GM12878 (cell line): ENCODE measurements at regions of chr2 and their contacts with region 1.

Region 1: GRCh38 chr2:152627351-152627957 is 89.8 kb downstream of the PRPF40A start:
- DNase-seq: no peak
- ATAC-seq: peak; percentile 74
- H3K4me3 ChIP-seq: no peak overlapping the region
- H3K27ac ChIP-seq: no peak overlapping the region
- H3K4me1 ChIP-seq: no peaks in the 10 kb centered on the region
- H3K27me3 ChIP-seq: no peaks in the 10 kb centered on the region
- CTCF ChIP-seq: peak; percentile 39 to 66 (median 42); a peak in 5 of 6 replicates
- EP300 ChIP-seq: no peak
- POLR2A ChIP-seq: no peak
- RAD21 ChIP-seq: peak; percentile 85

Region 2: GRCh38 chr2:152189622-152190495 is 437.6 kb before region 1 on chr2:
- CTCF ChIA-PET with region 1: interaction called, 38 read pairs
- POLR2A ChIA-PET with region 1: no interaction called
- RAD21 ChIA-PET with region 1: interaction called, 6 read pairs
- SMC1A ChIA-PET with region 1: interaction called, 12 read pairs
- in situ Hi-C with region 1: loop called (anchors 5 kb)
- intact Hi-C with region 1: no loop called
- DNase-seq: no peak
- ATAC-seq: peak; percentile 94
- H3K4me3 ChIP-seq: no peak overlapping the region
- H3K27ac ChIP-seq: no peak overlapping the region
- H3K4me1 ChIP-seq: no peaks in the 10 kb centered on the region
- H3K27me3 ChIP-seq: no peaks in the 10 kb centered on the region
- CTCF ChIP-seq: peak; percentile 71 to 79 (median 73)
- EP300 ChIP-seq: no peak
- POLR2A ChIP-seq: no peak
- RAD21 ChIP-seq: peak; percentile 97

Region 3: GRCh38 chr2:152558158-152558984 is 69.1 kb before region 1 on chr2:
- CTCF ChIA-PET with region 1: interaction called, 10 read pairs
- POLR2A ChIA-PET with region 1: no interaction called
- RAD21 ChIA-PET with region 1: interaction called, 3 read pairs
- SMC1A ChIA-PET with region 1: interaction called, 3 read pairs
- in situ Hi-C with region 1: no loop called
- intact Hi-C with region 1: loop called (anchors 5 kb)
- DNase-seq: no peak
- ATAC-seq: no peak
- H3K4me3 ChIP-seq: no peak overlapping the region
- H3K27ac ChIP-seq: no peak overlapping the region
- H3K4me1 ChIP-seq: no peaks in the 10 kb centered on the region
- H3K27me3 ChIP-seq: no peaks in the 10 kb centered on the region
- CTCF ChIP-seq: no peak
- EP300 ChIP-seq: no peak
- POLR2A ChIP-seq: no peak
- RAD21 ChIP-seq: no peak